Naive thymus-derived CD4-positive, alpha-beta T cell (primary cell): ENCODE measurements at regions of chr16 and their contacts with region 1.

Region 1: GRCh38 chr16:66357153-66357928 is 9.2 kb upstream of the CDH5 start:
- DNase-seq: peak in 3 of 9 donors; percentile 9 to 16 (median 11)
- ATAC-seq: no peak
- H3K4me3 ChIP-seq: no peak overlapping the region
- H3K4me3 Mint-ChIP-seq: no peak overlapping the region
- H3K27ac ChIP-seq: no peak overlapping the region
- H3K27ac Mint-ChIP-seq: no peak overlapping the region
- H3K4me1 ChIP-seq: no peaks in the 10 kb centered on the region
- H3K4me1 Mint-ChIP-seq: peaks cover 0 to 10% (median 4%) of the 10 kb centered on the region in 7 donors
- H3K27me3 ChIP-seq: no peaks in the 10 kb centered on the region
- H3K27me3 Mint-ChIP-seq: peaks cover 35 to 51% (median 44%) of the 10 kb centered on the region in 5 donors

Region 2: DNA sequence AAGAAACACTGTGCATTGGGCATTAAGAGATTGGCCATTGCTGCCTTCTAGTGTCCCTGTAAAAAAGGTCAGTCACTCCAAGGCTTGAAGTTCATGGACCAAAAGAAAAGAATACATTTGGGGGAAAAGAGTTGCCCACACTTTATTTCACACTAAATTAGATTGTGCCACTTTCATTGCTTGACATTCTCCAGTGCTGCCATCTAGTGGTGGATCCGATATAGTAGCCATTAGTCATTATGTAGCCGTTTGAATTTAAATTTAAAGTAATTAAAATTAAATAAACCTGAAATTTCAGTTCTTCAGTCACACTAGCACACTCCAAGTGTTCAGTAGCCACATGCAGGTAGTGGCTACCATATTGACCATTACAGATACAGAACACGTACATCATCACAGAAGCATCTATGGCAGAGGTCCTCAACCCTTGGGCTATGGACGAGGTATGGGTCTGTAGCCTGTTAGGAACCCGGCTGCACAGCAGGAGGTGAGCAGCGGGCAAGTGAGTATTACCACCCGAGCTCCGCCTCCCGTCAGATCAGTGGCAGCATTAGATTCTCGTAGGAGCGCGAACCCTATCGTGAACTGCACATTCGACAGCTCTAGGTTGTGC is 12.7 kb before region 1 on chr16:
- CTCF ChIA-PET with region 1: interaction called, 11 read pairs
- POLR2A ChIA-PET with region 1: no interaction called
- intact Hi-C with region 1: no loop called
- DNase-seq: peak in 4 of 9 donors; percentile 20 to 40 (median 27)
- ATAC-seq: peak; percentile 36
- H3K4me3 ChIP-seq: no peak overlapping the region
- H3K4me3 Mint-ChIP-seq: no peak overlapping the region
- H3K27ac ChIP-seq: no peak overlapping the region
- H3K27ac Mint-ChIP-seq: no peak overlapping the region
- H3K4me1 ChIP-seq: no peaks in the 10 kb centered on the region
- H3K4me1 Mint-ChIP-seq: no peaks in the 10 kb centered on the region
- H3K27me3 ChIP-seq: no peaks in the 10 kb centered on the region
- H3K27me3 Mint-ChIP-seq: peaks cover 12 to 51% (median 29%) of the 10 kb centered on the region in 5 donors

Region 3: GRCh38 chr16:66369055-66369592 is 11.8 kb after region 1 on chr16:
- CTCF ChIA-PET with region 1: interaction called, 11 read pairs
- POLR2A ChIA-PET with region 1: no interaction called
- intact Hi-C with region 1: no loop called
- DNase-seq: no peak
- ATAC-seq: peak; percentile 52
- H3K4me3 ChIP-seq: no peak overlapping the region
- H3K4me3 Mint-ChIP-seq: no peak overlapping the region
- H3K27ac ChIP-seq: no peak overlapping the region
- H3K27ac Mint-ChIP-seq: peak overlapping the region in 1 of 9 donors; percentile 37
- H3K4me1 ChIP-seq: no peaks in the 10 kb centered on the region
- H3K4me1 Mint-ChIP-seq: peaks cover 0 to 12% (median 4%) of the 10 kb centered on the region in 7 donors
- H3K27me3 ChIP-seq: no peaks in the 10 kb centered on the region
- H3K27me3 Mint-ChIP-seq: peaks cover 10 to 20% (median 17%) of the 10 kb centered on the region in 5 donors